ENCODE measurements at regions of chr10 and their contacts with region 1.

Region 1: GRCh38 chr10:3785257-3785850 is 345 bp upstream of the KLF6 start:
- DNase-seq: peak; percentile 97 to 100 (median 99)
- ATAC-seq: peak; percentile 79 to 88 (median 82)
- H3K4me3 ChIP-seq: peak overlapping the region; percentile 67 to 72
- H3K4me3 Mint-ChIP-seq: peak overlapping the region; percentile 95 to 100 (median 98)
- H3K27ac ChIP-seq: peak overlapping the region; percentile 99
- H3K27ac Mint-ChIP-seq: peak overlapping the region; percentile 96 to 98
- H3K4me1 ChIP-seq: peaks cover 12 to 35% of the 10 kb centered on the region in 2 experiments
- H3K4me1 Mint-ChIP-seq: peaks cover 30 to 39% (median 31%) of the 10 kb centered on the region in 3 donors
- H3K27me3 ChIP-seq: no peaks in the 10 kb centered on the region
- H3K27me3 Mint-ChIP-seq: no peaks in the 10 kb centered on the region

Region 2: GRCh38 chr10:3676564-3676963 is 108.8 kb before region 1 on chr10:
- CTCF ChIA-PET with region 1: no interaction called
- POLR2A ChIA-PET with region 1: no interaction called
- DNase-seq: no peak
- ATAC-seq: no peak
- H3K4me3 ChIP-seq: no peak overlapping the region
- H3K4me3 Mint-ChIP-seq: no peak overlapping the region
- H3K27ac ChIP-seq: no peak overlapping the region
- H3K27ac Mint-ChIP-seq: peak overlapping the region in 1 of 2 donors; percentile 6
- H3K4me1 ChIP-seq: no peaks in the 10 kb centered on the region
- H3K4me1 Mint-ChIP-seq: no peaks in the 10 kb centered on the region
- H3K27me3 ChIP-seq: no peaks in the 10 kb centered on the region
- H3K27me3 Mint-ChIP-seq: no peaks in the 10 kb centered on the region

Region 3: DNA sequence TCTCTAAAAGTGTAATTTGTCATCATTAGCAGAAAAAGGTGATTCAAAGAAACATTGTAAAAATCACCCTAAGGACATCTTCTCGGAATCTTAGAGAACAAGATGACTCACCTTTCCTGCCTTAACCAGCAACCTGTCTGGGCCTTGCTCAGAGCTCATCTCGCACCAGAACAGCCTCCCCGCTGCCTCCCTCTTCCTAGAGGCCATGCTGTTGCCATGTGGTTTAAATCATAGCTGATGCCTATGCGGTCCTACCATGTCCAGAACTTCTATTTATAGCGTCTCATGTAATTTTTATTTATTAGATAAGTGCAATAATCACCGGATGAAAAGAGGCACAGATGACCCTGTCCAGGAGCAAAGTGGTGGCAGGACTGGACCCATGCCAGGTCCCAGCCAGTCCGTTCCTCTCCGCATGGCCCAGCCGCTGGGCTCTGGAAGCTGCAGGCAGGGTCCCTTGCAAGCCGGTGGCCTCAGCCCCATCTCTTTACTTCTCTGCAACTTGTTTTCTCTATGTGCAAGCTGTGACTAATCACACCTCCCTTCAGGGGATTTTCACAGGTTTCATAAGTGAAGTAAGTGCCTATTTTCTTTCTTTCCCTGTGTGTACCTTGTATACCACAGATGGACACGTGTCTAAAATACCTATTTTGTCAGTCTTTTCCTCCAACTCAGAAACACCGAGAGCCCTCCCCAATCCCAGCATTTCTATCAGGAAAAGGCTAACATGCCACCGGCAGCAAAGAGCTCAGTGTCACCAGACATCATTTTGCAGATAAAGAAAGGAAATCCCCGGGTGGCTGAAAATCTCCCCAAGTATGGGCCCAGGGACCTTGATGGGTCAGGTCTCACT is 27.5 kb before region 1 on chr10:
- CTCF ChIA-PET with region 1: no interaction called
- POLR2A ChIA-PET with region 1: interaction called in 1 of 2 experiments, 11 read pairs
- DNase-seq: peak in 19 of 35 experiments; percentile 28 to 76 (median 43)
- ATAC-seq: peak; percentile 77 to 87 (median 85)
- H3K4me3 ChIP-seq: peak overlapping the region in 1 of 2 donors; percentile 16
- H3K4me3 Mint-ChIP-seq: peak overlapping the region; percentile 37 to 64 (median 59)
- H3K27ac ChIP-seq: peak overlapping the region; percentile 97
- H3K27ac Mint-ChIP-seq: peak overlapping the region; percentile 96 to 98
- H3K4me1 ChIP-seq: peaks cover 0 to 50% of the 10 kb centered on the region in 2 experiments
- H3K4me1 Mint-ChIP-seq: peaks cover 31 to 78% (median 67%) of the 10 kb centered on the region in 3 donors
- H3K27me3 ChIP-seq: no peaks in the 10 kb centered on the region
- H3K27me3 Mint-ChIP-seq: peaks cover 0 to 4% of the 10 kb centered on the region in 2 donors

Region 4: DNA sequence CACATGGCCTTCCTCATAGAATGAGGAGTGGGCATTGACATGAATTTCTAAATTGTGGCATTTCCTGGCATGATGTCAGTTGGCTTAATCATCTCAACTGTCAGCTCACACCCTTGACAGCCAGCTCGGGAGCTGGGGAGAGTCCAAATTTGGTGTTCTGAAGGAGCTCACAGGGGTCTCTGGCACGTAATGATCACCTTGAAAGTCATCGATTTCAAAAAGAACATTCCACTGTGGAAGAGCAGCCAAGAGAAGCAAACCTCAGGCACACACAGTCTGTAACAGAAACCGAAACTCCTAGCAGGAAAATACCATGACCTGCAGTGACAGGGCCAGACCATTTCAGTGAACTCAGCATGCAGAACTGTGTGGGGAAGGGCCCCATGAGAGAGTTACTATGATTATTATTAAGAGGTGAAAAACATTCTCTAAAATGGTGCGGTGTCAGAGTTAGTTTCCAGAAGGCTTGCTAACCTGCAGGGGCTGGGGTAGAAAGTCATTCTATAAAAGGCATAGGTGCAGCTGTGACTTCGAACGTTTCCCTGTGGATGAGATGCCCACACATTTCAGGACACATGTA is 26.0 kb after region 1 on chr10:
- CTCF ChIA-PET with region 1: interaction called in 1 of 2 experiments, 3 read pairs
- POLR2A ChIA-PET with region 1: interaction called, 14 to 240 read pairs
- DNase-seq: peak in 13 of 35 experiments; percentile 6 to 71 (median 19)
- ATAC-seq: peak; percentile 34 to 65 (median 48)
- H3K4me3 ChIP-seq: peak overlapping the region in 1 of 2 donors; percentile 19
- H3K4me3 Mint-ChIP-seq: peak overlapping the region; percentile 45 to 67 (median 63)
- H3K27ac ChIP-seq: peak overlapping the region; percentile 98
- H3K27ac Mint-ChIP-seq: no peak overlapping the region
- H3K4me1 ChIP-seq: peaks cover 33 to 55% of the 10 kb centered on the region in 2 experiments
- H3K4me1 Mint-ChIP-seq: peaks cover 22 to 86% (median 60%) of the 10 kb centered on the region in 3 donors
- H3K27me3 ChIP-seq: no peaks in the 10 kb centered on the region
- H3K27me3 Mint-ChIP-seq: no peaks in the 10 kb centered on the region

Region 5: DNA sequence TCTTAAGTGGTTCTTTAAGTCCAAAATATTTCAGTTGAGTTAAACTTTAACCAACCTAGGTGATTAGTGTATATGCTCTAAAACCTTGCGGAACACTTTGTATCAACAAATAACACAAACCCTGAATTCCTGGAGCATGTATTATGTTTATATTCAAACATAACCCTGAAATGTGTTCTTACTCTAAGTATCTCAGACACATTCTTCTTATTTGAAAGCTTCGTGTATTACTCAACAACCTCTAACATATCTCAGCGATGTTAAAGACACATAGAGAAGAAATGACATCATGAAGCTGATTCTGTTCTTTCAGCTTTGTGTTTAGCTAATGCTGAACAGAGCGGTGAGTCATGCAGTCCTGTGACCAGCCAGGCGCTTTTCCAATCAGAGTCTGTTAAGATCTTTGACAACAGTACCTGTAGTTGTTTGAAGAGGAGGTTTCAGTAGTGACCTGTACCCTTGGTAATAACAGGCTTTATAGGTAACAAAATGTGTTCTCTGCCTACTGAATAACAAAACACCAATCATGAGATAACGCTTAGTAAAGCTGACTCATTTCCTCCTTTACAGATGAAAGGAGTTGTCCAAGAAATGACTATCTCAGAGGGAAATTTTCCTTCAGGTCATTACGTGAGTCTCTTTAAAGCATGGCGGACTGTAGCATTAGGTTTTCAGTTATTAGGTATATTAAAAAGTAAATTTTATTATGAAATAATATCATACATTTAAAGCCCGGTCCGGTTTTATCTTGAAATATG is 67.0 kb after region 1 on chr10:
- CTCF ChIA-PET with region 1: interaction called in 1 of 2 experiments, 3 read pairs
- POLR2A ChIA-PET with region 1: interaction called, 4 to 73 read pairs
- DNase-seq: peak in 31 of 35 experiments; percentile 20 to 79 (median 45)
- ATAC-seq: peak; percentile 81 to 95 (median 88)
- H3K4me3 ChIP-seq: no peak overlapping the region
- H3K4me3 Mint-ChIP-seq: peak overlapping the region in 1 of 3 donors; percentile 42
- H3K27ac ChIP-seq: peak overlapping the region; percentile 85
- H3K27ac Mint-ChIP-seq: peak overlapping the region; percentile 87 to 90
- H3K4me1 ChIP-seq: peaks cover 0 to 20% of the 10 kb centered on the region in 2 experiments
- H3K4me1 Mint-ChIP-seq: peaks cover 19 to 36% (median 28%) of the 10 kb centered on the region in 3 donors
- H3K27me3 ChIP-seq: no peaks in the 10 kb centered on the region
- H3K27me3 Mint-ChIP-seq: no peaks in the 10 kb centered on the region

Region 6: DNA sequence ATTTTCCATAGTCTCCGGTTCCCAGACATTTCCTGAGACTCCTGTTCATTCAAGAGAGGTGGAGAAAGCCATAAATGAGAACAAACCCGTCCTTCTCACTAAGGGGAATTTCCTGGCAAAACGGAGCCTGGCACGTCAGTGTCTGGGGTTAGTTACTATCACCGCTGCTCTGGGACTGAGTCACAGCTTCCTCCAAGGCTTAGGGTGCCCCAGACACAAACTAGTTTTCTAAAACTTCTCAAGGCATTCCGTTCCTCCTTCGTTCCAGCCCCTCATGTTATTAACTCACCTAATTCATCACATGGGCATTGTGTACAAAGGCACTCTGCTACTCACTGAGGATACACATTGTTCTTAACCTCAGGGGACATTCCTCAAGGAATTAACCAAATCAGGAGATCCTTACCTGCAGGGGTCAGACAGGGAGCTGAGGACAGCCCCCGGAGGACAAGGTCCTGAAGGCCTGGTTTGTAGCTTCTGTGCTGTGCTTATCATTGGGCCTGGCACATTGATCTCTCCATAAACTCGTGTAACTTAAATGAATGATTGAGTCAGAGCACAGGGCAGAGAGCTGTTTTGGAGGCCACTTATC is 102.6 kb after region 1 on chr10:
- CTCF ChIA-PET with region 1: interaction called in 1 of 2 experiments, 3 read pairs
- POLR2A ChIA-PET with region 1: interaction called, 6 to 32 read pairs
- DNase-seq: peak in 34 of 35 experiments; percentile 21 to 88 (median 48)
- ATAC-seq: peak; percentile 61 to 78 (median 70)
- H3K4me3 ChIP-seq: peak overlapping the region in 1 of 2 donors; percentile 11
- H3K4me3 Mint-ChIP-seq: peak overlapping the region in 2 of 3 donors; percentile 21 to 53
- H3K27ac ChIP-seq: peak overlapping the region; percentile 88
- H3K27ac Mint-ChIP-seq: peak overlapping the region; percentile 87 to 96
- H3K4me1 ChIP-seq: peaks cover 6 to 34% of the 10 kb centered on the region in 2 experiments
- H3K4me1 Mint-ChIP-seq: peaks cover 13 to 56% (median 37%) of the 10 kb centered on the region in 3 donors
- H3K27me3 ChIP-seq: no peaks in the 10 kb centered on the region
- H3K27me3 Mint-ChIP-seq: peaks cover 0 to 1% of the 10 kb centered on the region in 2 donors

Region 7: DNA sequence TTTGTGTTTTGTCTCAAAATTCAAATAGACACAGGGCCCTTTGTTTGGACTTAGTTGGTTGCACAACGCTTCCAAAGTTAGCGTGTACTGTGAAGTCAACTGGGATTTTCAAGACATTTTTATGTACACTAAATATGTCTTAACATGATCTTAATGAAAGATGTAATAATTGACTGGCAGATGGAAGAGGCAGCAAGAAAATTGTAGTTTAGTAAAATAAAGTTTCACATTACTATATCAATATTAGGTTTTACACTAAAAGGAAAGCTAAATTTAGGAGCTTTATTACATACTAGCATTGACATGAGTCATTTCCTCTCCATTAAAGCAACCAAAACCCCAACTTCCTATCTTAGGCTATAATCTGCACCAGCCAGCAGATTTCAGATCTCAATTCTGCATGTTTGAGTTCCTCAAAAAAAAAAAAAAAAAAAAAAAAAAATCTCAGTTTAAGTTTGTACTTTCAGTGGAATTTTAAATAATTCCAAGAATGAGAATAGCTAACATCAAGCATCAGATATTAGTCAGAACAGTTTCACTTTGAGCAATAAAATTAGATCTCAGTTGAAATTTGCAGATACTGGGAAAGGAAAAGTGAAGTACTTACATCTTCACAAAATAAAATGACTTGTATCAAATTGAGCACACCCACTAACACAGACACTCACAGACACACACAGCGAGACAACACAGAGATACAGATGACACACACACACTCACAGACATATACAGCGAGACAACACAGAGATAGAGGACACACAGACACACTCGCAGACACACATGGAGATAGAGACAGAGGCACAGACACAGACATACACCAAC is 346.3 kb after region 1 on chr10:
- CTCF ChIA-PET with region 1: no interaction called
- POLR2A ChIA-PET with region 1: interaction called in 1 of 2 experiments, 11 read pairs
- DNase-seq: peak in 14 of 35 experiments; percentile 7 to 78 (median 22)
- ATAC-seq: peak; percentile 89 to 95 (median 92)
- H3K4me3 ChIP-seq: peak overlapping the region in 1 of 2 donors; percentile 6
- H3K4me3 Mint-ChIP-seq: no peak overlapping the region
- H3K27ac ChIP-seq: peak overlapping the region; percentile 49
- H3K27ac Mint-ChIP-seq: no peak overlapping the region
- H3K4me1 ChIP-seq: peaks cover 24 to 33% of the 10 kb centered on the region in 2 experiments
- H3K4me1 Mint-ChIP-seq: peaks cover 8 to 41% (median 30%) of the 10 kb centered on the region in 3 donors
- H3K27me3 ChIP-seq: no peaks in the 10 kb centered on the region
- H3K27me3 Mint-ChIP-seq: no peaks in the 10 kb centered on the region